ENCODE measurements at regions of chr19 and their contacts with region 1.

Region 1: GRCh38 chr19:49676690-49677231 is 310 bp upstream of the PRMT1 start:
- DNase-seq: peak; percentile 95 to 100 (median 98)
- ATAC-seq: peak; percentile 72
- H3K4me3 ChIP-seq: peak overlapping the region; percentile 99
- H3K4me3 Mint-ChIP-seq: peak overlapping the region; percentile 97
- H3K27ac ChIP-seq: peak overlapping the region; percentile 98
- H3K27ac Mint-ChIP-seq: peak overlapping the region; percentile 97
- H3K4me1 ChIP-seq: peaks cover 56% of the 10 kb centered on the region
- H3K4me1 Mint-ChIP-seq: peaks cover 46% of the 10 kb centered on the region
- H3K27me3 ChIP-seq: no peaks in the 10 kb centered on the region
- H3K27me3 Mint-ChIP-seq: no peaks in the 10 kb centered on the region
- CTCF ChIP-seq: no peak

Region 2: DNA sequence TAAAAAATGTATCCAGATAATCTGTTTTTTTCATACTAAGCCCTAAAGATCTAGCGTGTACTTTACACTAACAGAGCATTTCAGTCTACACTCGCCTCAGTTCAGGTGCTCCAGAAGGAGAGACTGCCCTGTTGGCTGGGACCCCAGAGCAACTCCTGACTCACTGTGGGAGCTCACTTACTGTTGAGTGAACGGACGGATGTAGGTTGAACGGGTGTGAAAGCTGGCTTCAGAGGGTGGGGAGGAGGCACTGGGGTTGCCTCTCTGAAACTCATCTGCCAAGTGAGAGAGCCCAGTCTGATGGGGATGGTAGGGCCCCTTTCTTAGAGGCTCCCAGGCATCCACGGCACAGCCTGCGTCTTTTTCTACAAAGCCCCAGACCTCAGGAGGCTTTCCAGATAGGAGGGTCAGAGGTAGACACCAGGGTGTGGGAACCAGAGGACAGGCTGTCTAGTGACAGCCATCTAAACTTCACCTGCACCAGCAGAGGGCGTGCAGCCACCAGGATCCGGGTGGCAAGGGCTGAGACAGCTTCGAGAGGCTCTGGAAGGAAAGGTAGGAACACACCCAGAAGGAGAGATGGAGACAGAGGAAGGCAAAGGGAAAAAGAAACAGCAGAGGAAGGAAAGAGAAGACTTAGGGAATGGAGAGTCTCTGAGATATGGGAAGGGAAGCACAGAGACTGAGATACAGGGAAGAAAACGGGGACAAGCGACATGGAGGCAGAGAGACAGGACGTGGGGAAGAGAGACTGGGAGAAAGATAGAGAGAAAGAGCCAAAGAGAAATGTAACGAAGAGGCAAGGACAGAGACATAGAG is 285.0 kb before region 1 on chr19:
- CTCF ChIA-PET with region 1: interaction called, 4 read pairs
- POLR2A ChIA-PET with region 1: no interaction called
- intact Hi-C with region 1: loop called (anchors 1 to 5 kb)
- DNase-seq: peak; percentile 67 to 89 (median 76)
- ATAC-seq: peak; percentile 76
- H3K4me3 ChIP-seq: no peak overlapping the region
- H3K4me3 Mint-ChIP-seq: no peak overlapping the region
- H3K27ac ChIP-seq: no peak overlapping the region
- H3K27ac Mint-ChIP-seq: no peak overlapping the region
- H3K4me1 ChIP-seq: peaks cover 23% of the 10 kb centered on the region
- H3K4me1 Mint-ChIP-seq: peaks cover 19% of the 10 kb centered on the region
- H3K27me3 ChIP-seq: no peaks in the 10 kb centered on the region
- H3K27me3 Mint-ChIP-seq: no peaks in the 10 kb centered on the region
- CTCF ChIP-seq: peak; percentile 95

Region 3: GRCh38 chr19:49502866-49503581 is 173.7 kb before region 1 on chr19:
- CTCF ChIA-PET with region 1: interaction called, 5 read pairs
- POLR2A ChIA-PET with region 1: interaction called, 11 read pairs
- intact Hi-C with region 1: loop called (anchors 1 to 2 kb)
- DNase-seq: peak in 9 of 14 experiments; percentile 39 to 86 (median 56)
- ATAC-seq: no peak
- H3K4me3 ChIP-seq: no peak overlapping the region
- H3K4me3 Mint-ChIP-seq: peak overlapping the region; percentile 81
- H3K27ac ChIP-seq: peak overlapping the region in 1 of 2 donors; percentile 9
- H3K27ac Mint-ChIP-seq: peak overlapping the region; percentile 98
- H3K4me1 ChIP-seq: peaks cover 56% of the 10 kb centered on the region
- H3K4me1 Mint-ChIP-seq: peaks cover 60% of the 10 kb centered on the region
- H3K27me3 ChIP-seq: no peaks in the 10 kb centered on the region
- H3K27me3 Mint-ChIP-seq: no peaks in the 10 kb centered on the region
- CTCF ChIP-seq: peak; percentile 69

Region 4: GRCh38 chr19:49590071-49590970 is 86.4 kb before region 1 on chr19:
- CTCF ChIA-PET with region 1: interaction called, 5 read pairs
- POLR2A ChIA-PET with region 1: interaction called, 32 read pairs
- intact Hi-C with region 1: loop called in 1 of 2 experiments (anchors 1 kb)
- DNase-seq: peak; percentile 87 to 99 (median 94)
- ATAC-seq: peak; percentile 70
- H3K4me3 ChIP-seq: peak overlapping the region; percentile 96
- H3K4me3 Mint-ChIP-seq: peak overlapping the region; percentile 82
- H3K27ac ChIP-seq: peak overlapping the region; percentile 77 to 91
- H3K27ac Mint-ChIP-seq: peak overlapping the region; percentile 82
- H3K4me1 ChIP-seq: peaks cover 49% of the 10 kb centered on the region
- H3K4me1 Mint-ChIP-seq: peaks cover 41% of the 10 kb centered on the region
- H3K27me3 ChIP-seq: no peaks in the 10 kb centered on the region
- H3K27me3 Mint-ChIP-seq: no peaks in the 10 kb centered on the region
- CTCF ChIP-seq: no peak

Region 5: DNA sequence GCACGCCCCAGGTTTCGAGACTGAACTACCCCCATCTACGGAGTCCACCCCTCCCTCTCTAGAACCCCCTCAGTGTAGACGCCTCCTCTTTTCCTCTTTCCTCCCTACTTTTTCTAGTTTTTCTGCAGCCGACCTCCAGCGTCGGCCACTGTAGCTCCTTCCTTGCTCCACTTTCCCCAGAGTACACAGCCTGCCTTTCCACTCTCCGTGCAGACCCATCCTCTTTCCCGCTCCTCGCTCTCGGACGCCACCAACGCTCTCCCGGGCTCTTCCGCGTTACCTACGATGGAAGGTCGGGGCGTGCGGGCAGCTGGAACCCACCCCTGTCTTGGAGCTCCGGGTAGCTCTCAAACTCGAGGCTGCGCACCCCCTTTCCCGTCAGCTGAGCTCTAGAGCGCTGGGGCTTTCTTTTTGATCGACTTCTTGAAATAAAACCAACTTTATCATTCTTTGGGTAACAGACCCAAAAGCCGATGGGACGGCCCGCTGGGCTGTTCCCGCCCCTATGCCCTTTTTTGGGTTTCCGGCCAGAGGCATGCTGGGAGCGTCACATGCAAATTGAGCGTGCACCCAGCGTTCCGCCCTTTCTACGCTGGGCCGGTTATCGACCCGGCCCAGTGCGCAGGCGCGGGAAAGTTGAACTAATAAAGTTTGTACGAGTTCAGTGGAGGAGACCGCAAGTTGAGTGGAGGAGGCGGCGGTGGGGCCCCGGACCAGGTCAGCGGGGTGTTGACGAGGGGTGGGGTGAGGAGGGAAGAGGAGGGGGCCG is 11.2 kb before region 1 on chr19 and contains the starts of genes BCL2L12 and IRF3:
- CTCF ChIA-PET with region 1: interaction called, 7 read pairs
- POLR2A ChIA-PET with region 1: interaction called, 92 read pairs
- intact Hi-C with region 1: loop called (anchors 1 kb)
- DNase-seq: peak; percentile 99 to 100 (median 99)
- ATAC-seq: peak; percentile 78
- H3K4me3 ChIP-seq: peak within 1 kb of the TSS; percentile 62
- H3K4me3 Mint-ChIP-seq: peak within 1 kb of the TSS; percentile 95
- H3K27ac ChIP-seq: peak within 1 kb of the TSS; percentile 57 to 90
- H3K27ac Mint-ChIP-seq: peak within 1 kb of the TSS; percentile 88
- H3K4me1 ChIP-seq: peaks cover 44% of the 10 kb centered on the region
- H3K4me1 Mint-ChIP-seq: peaks cover 18% of the 10 kb centered on the region
- H3K27me3 ChIP-seq: no peaks in the 10 kb centered on the region
- H3K27me3 Mint-ChIP-seq: no peaks in the 10 kb centered on the region
- CTCF ChIP-seq: no peak
- total RNA-seq, gene BCL2L12: 9.9 to 11.3 TPM
- total RNA-seq, gene IRF3: 109 to 119 TPM

Measured in CD4-positive, alpha-beta T cell (primary cell).